CD4-positive, alpha-beta T cell (primary cell): ENCODE measurements at regions of chr11 and their contacts with region 1.

Region 1: DNA sequence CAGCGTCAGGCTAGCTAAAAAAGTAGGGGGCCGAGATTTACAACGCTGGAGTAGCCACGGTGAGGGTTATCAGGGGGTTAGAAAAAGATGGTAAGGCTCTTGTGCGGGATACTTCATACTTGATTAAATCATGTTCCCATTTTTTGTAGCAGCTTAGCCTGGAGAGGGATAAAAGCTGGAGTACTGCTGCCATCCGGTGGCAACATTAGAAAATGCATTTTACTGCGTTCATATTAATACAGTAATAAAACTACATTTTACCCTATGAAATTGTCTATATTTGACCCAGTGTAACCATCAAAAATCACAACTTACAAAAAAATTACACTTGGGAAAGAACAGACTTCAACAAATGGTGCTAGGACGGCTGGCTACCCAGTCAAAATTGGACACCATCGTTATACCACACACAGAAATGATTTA is 17.3 kb downstream of the RPUSD4 start:
- DNase-seq: peak in 7 of 14 experiments; percentile 20 to 62 (median 41)
- ATAC-seq: no peak
- H3K4me3 ChIP-seq: no peak overlapping the region
- H3K4me3 Mint-ChIP-seq: no peak overlapping the region
- H3K27ac ChIP-seq: no peak overlapping the region
- H3K27ac Mint-ChIP-seq: no peak overlapping the region
- H3K4me1 ChIP-seq: no peaks in the 10 kb centered on the region
- H3K4me1 Mint-ChIP-seq: no peaks in the 10 kb centered on the region
- H3K27me3 ChIP-seq: no peaks in the 10 kb centered on the region
- H3K27me3 Mint-ChIP-seq: no peaks in the 10 kb centered on the region
- CTCF ChIP-seq: peak; percentile 76

Region 2: DNA sequence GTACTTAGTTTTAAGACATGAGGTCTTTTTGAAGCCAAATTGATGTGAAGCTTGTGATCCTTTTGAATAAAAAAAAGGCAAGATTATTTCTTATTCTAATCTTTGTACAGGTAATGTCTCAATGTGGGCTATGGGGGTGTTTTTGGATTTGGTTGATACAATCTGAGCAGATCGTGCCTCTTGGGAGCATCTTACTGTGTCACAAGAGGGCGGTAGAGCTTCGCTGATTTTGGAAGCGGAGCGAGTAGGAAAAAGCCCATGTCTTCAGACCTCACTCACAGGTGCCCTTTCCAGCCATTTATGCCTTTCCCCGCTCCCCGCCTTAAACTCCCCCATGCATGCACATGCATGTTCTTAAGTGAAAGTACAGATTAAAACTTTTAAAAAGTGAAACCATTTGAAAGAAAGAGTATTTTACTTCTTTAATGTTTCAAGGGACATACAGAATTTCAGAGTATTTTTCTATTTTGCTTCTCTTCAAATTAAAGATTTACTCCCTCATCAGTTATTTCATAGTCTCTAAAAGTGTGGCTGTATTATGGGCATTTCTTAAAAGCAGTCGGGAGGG is 271.0 kb before region 1 on chr11:
- CTCF ChIA-PET with region 1: interaction called, 10 read pairs
- POLR2A ChIA-PET with region 1: no interaction called
- intact Hi-C with region 1: loop called (anchors 1 kb)
- DNase-seq: peak; percentile 29 to 78 (median 42)
- ATAC-seq: peak; percentile 61
- H3K4me3 ChIP-seq: no peak overlapping the region
- H3K4me3 Mint-ChIP-seq: no peak overlapping the region
- H3K27ac ChIP-seq: no peak overlapping the region
- H3K27ac Mint-ChIP-seq: no peak overlapping the region
- H3K4me1 ChIP-seq: no peaks in the 10 kb centered on the region
- H3K4me1 Mint-ChIP-seq: no peaks in the 10 kb centered on the region
- H3K27me3 ChIP-seq: peaks cover 2 to 3% of the 10 kb centered on the region in 2 experiments
- H3K27me3 Mint-ChIP-seq: peaks cover 22% of the 10 kb centered on the region
- CTCF ChIP-seq: peak; percentile 79

Region 3: DNA sequence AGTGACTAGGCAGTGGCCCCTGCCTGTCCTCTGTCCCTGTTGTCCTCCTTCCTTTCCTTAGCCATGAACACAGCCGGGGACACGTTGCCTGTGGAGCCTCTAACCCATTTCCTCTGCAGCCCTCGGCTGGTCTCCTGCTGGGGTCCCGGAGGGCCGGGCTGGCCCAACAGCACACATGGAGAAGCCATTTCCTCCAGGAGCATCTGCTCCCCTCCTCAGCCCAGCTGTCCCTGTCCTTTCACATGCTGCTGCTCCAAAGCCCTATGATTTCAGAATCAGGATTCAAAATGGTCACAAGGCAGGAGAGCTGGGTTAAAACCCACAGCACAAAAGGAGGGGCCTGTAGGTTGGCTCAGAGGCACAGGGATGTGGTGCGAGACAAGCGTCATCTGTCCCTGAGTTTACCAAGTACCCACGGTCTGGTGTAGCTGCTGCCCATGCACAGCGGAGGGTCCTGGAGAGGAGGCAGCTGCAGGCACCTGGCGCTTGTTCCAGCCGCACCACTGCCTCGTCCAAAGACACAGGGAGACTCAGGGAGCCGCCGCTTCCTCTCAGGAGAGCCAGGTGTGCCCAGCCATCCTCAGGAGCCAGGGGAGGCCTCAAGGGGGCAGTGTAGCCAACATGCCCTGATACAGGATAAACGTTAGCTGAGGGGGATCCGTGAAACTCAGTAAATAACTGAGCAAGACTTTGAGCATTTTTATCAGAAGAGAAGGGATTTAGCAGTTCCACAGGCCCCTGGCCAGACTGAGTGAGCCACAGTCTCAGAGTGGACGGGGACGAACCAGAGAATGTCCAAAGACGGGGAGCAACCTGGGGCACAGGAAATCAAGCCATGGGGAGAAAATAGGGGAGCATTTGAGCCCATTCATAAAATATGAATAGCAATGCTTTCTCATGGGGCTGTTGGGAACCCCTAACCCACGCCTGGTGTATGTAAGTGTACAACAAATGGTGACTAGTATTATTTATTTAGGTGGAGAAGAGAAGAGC is 252.2 kb before region 1 on chr11:
- CTCF ChIA-PET with region 1: interaction called, 4 read pairs
- POLR2A ChIA-PET with region 1: no interaction called
- intact Hi-C with region 1: loop called (anchors 1 kb)
- DNase-seq: peak; percentile 11 to 64 (median 34)
- ATAC-seq: no peak
- H3K4me3 ChIP-seq: no peak overlapping the region
- H3K4me3 Mint-ChIP-seq: no peak overlapping the region
- H3K27ac ChIP-seq: no peak overlapping the region
- H3K27ac Mint-ChIP-seq: no peak overlapping the region
- H3K4me1 ChIP-seq: peaks cover 14% of the 10 kb centered on the region
- H3K4me1 Mint-ChIP-seq: peaks cover 6% of the 10 kb centered on the region
- H3K27me3 ChIP-seq: peaks cover 0 to 3% of the 10 kb centered on the region in 2 experiments
- H3K27me3 Mint-ChIP-seq: no peaks in the 10 kb centered on the region
- CTCF ChIP-seq: peak; percentile 62